ENCODE measurements at regions of chr17 and their contacts with region 1.

Region 1: DNA sequence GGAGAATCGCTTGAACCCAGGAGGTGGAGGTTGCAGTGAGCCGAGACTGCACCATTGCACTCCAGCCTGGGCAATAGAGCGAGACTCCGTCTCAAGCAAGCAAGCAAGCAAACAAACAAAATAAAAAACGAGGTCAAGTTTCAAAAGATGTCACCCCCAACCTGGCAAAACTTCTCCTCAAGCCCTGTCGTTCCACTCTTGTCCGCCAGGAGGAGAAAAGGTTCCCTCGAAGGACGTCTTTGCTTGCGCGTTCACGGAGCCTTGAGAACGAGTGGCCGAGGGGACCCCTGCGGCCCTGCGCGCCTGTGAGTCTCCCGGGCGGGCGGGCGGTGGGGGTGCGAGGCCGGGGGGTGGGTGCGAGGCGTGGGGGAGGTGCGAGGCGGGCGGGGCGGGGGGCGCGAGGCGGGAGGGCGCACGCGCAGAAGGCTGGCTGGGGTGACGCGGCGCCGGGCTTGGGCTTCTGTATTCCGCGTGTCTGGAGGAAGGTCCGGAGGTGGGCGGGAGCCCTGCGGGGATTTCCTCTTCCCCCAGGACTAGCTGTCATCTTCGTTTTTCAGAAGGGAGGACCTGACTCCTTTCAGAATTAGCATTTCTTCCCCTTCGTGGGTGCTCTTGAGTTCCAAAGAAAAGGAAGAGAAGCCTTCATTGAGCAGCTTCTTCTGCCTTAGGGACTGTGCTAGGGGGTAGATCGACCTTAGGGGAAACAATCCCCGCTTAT is 3.7 kb downstream of the SLC52A1 start:
- DNase-seq: peak; percentile 91
- H3K4me3 Mint-ChIP-seq: peak overlapping the region; percentile 75
- H3K27ac Mint-ChIP-seq: peak overlapping the region; percentile 84
- H3K4me1 Mint-ChIP-seq: peaks cover 14% of the 10 kb centered on the region
- H3K27me3 Mint-ChIP-seq: peaks cover 2% of the 10 kb centered on the region

Region 2: DNA sequence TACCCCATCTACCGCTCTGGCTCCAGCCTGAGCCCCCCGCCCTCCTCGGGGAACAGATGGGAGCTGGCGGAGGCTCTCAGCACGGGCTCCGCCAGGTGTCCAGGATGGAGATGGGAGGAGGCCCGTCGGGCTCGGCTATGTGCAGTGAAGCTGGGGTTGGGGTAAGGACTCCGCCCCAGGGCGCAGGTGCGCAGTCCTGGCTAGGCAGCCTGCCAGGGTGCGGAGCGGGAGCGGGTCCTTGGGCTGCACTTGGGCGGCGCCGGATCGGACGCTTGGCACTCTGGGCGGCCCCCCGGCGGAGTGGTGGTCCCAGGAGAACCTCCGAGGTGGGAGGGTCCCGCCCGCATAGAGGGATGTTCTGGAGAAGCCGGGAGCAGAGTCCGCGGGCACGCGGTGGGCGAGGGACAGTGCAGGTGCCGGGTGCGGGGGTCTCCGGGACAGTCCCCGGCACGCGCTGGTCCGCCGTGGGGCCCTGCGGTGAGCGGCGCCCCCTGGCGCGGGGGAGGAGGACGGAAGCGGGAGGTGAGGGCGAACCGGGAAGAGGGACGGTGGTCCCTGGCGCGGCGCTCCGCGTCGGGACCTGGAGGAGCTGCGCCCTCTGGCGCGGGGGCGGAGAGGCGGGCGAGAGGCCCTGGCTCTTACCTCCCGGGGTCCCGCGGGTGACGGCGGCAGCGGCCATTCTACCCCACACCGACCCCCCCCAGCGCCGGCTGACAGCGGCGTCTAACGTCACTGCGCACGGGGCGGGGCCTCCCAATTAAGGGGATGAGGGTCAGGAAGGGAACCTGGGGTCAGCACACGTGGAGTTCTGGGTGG is 44.4 kb before region 1 on chr17 and contains the start of gene CAMTA2:
- CTCF ChIA-PET with region 1: no interaction called
- intact Hi-C with region 1: loop called (anchors 1 kb)
- DNase-seq: peak; percentile 87
- H3K4me3 Mint-ChIP-seq: peak within 1 kb of the TSS; percentile 88
- H3K27ac Mint-ChIP-seq: peak within 1 kb of the TSS; percentile 92
- H3K4me1 Mint-ChIP-seq: peaks cover 29% of the 10 kb centered on the region
- H3K27me3 Mint-ChIP-seq: no peaks in the 10 kb centered on the region
- total RNA-seq, gene CAMTA2: 79.1 to 79.5 TPM

Region 3: GRCh38 chr17:4997302-4998026 is 34.1 kb before region 1 on chr17 and contains the starts of genes INCA1 and KIF1C:
- CTCF ChIA-PET with region 1: no interaction called
- intact Hi-C with region 1: loop called (anchors 1 kb)
- DNase-seq: peak; percentile 93
- H3K4me3 Mint-ChIP-seq: peak within 1 kb of the TSS; percentile 83
- H3K27ac Mint-ChIP-seq: peak within 1 kb of the TSS; percentile 53
- H3K4me1 Mint-ChIP-seq: peaks cover 18% of the 10 kb centered on the region
- H3K27me3 Mint-ChIP-seq: no peaks in the 10 kb centered on the region
- total RNA-seq, gene INCA1: 0.21 to 0.54 TPM
- total RNA-seq, gene KIF1C: 30.5 to 31.1 TPM

Region 4: GRCh38 chr17:5042157-5043022 is 10.9 kb after region 1 on chr17:
- CTCF ChIA-PET with region 1: interaction called, 6 read pairs
- intact Hi-C with region 1: loop called (anchors 1 kb)
- DNase-seq: peak; percentile 49
- H3K4me3 Mint-ChIP-seq: peak overlapping the region; percentile 77
- H3K27ac Mint-ChIP-seq: peak overlapping the region; percentile 86
- H3K4me1 Mint-ChIP-seq: peaks cover 34% of the 10 kb centered on the region
- H3K27me3 Mint-ChIP-seq: no peaks in the 10 kb centered on the region

Region 5: DNA sequence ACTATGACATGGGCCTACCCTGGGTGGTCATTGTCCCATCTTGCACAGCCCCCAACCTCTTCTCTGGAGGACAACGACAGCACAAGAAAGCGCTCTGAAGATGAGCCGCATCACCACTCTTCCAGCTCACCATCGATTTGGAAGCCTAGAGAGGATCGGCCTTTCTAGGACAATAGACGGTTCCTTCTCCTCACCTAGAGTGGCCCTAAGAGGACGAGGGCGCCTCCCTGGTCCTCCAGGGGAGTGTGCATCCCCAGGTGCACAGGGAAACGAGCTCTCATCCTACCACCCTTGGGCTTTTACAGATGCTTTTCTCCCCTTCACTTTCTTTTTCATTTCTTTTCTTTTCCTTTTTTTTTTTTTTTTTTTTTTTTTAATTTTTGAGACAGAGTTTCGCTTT is 24.0 kb after region 1 on chr17:
- CTCF ChIA-PET with region 1: interaction called, 58 read pairs
- intact Hi-C with region 1: no loop called
- DNase-seq: no peak
- H3K4me3 Mint-ChIP-seq: no peak overlapping the region
- H3K27ac Mint-ChIP-seq: no peak overlapping the region
- H3K4me1 Mint-ChIP-seq: no peaks in the 10 kb centered on the region
- H3K27me3 Mint-ChIP-seq: no peaks in the 10 kb centered on the region

Region 6: DNA sequence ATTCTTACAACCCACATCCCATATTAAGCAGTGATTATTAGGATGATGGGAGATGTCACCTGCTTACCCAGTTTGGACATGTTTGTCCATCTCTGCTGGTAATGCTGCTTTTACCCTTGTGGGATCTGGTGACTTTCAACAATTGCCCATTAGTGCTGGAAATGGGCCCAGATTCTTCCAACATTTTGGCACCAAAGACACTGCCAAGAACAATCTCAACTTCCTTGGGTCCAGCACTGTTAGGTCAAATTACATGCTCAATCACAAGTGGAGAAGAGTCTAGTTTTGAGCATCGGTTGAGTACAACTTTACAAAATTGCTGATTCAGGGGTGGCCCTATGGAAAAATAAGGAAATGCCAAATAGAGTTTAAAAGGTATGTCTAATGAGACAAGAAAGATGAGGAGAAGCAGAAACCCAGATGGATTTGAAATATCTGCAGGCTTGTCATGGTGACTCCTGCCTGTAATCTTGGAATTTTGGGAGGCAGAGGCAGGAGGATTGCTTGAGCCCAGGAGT is 33.8 kb after region 1 on chr17:
- CTCF ChIA-PET with region 1: interaction called, 58 read pairs
- intact Hi-C with region 1: loop called (anchors 1 kb)
- DNase-seq: no peak
- H3K4me3 Mint-ChIP-seq: no peak overlapping the region
- H3K27ac Mint-ChIP-seq: no peak overlapping the region
- H3K4me1 Mint-ChIP-seq: no peaks in the 10 kb centered on the region
- H3K27me3 Mint-ChIP-seq: no peaks in the 10 kb centered on the region

Region 7: GRCh38 chr17:5203908-5204294 is 172.4 kb after region 1 on chr17:
- CTCF ChIA-PET with region 1: no interaction called
- intact Hi-C with region 1: no loop called
- DNase-seq: no peak
- H3K4me3 Mint-ChIP-seq: no peak overlapping the region
- H3K27ac Mint-ChIP-seq: no peak overlapping the region
- H3K4me1 Mint-ChIP-seq: peaks cover 4% of the 10 kb centered on the region
- H3K27me3 Mint-ChIP-seq: no peaks in the 10 kb centered on the region

Region 8: DNA sequence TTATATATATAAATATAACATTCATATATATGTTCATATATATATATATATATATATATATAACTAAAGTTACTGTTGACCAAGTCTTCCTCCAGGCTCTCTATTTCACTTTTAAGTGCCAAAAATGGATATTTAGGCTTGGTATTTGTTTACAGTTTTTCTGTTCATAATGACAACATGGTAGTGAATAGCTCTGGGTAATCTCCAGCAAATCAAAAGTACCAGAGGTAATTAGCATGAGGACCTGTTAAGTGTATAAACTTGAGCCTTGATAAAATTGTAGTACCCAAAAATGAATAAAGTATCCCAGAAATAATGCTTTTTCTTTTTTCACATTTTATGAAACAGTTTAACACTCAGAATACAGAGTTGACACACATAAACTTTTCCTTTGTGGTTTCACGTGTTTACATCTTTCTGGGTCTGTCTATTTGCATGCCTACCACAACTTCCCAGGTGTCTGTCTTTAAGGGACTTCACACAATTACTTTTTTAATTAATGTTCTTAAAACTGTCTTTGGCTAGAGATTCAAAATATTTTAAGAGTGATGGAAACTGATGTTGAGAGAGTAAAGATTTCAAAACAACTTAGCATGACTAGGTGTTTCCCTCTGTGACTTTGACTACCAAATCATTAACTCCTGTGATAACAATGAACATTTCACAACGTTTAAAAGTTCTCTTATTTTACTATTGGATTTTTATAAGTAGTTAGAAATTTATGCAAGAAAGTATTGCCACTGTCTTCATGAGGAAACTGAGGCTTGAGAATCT is 298.4 kb after region 1 on chr17:
- CTCF ChIA-PET with region 1: no interaction called
- intact Hi-C with region 1: no loop called
- DNase-seq: peak; percentile 10
- H3K4me3 Mint-ChIP-seq: no peak overlapping the region
- H3K27ac Mint-ChIP-seq: peak overlapping the region; percentile 77
- H3K4me1 Mint-ChIP-seq: peaks cover 35% of the 10 kb centered on the region
- H3K27me3 Mint-ChIP-seq: no peaks in the 10 kb centered on the region